Activated CD4-positive, alpha-beta T cell treated with anti-CD3 and anti-CD28 coated beads, Interleukin-2, amount 10 ng/mL, durations not matched to agents 24 days and 14 days (primary cell): ENCODE measurements at regions of chr3 and their contacts with region 1.

Region 1: DNA sequence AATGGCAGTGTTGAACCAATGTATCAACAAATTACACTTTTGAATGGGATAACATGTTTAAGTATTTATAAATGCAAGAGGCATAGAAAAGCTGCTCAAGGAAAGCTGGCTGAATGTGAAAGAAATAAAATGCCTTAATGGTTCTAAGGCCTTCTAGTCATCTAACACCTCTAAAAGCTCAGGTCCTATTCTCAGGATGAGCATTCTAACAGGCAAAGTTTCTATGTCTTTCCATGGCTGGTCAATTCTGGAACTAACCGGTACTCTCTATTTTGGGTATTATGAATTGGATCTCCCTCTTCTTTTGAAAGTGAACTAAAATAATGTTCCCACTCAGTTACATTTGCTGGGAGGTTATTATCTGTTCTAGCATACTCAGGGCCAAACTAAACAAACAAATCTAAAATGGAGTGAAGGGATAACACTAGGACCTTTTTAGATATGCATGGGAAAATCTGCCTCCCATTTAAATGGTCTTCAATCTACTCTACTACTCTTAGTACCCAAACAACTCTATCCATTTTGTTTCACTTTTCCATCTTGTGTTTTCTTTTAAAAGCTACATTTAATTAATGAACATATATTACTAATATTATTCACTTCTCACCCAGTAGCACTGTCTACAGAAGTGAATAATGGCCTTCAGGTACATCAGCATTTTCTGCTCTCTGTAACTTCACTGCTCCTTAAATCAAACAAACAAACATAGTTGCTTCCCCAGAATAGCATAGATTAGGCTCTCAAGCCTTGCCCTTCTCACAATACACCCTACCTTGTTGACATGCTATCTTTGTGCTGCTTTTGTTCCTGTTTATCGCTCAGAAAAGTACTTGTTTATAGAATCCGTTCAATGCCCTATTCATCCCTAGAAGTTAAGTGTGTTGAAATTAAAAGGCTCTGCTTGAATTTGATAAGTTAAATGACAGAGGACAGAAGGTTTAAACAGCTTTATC is 46.4 kb downstream of the CBLB start:
- DNase-seq: no peak
- H3K4me3 Mint-ChIP-seq: peak overlapping the region; percentile 16
- H3K27ac Mint-ChIP-seq: peak overlapping the region; percentile 95
- H3K4me1 Mint-ChIP-seq: peaks cover 52% of the 10 kb centered on the region
- H3K27me3 Mint-ChIP-seq: no peaks in the 10 kb centered on the region

Region 2: GRCh38 chr3:105431200-105431599 is 391.2 kb before region 1 on chr3:
- intact Hi-C with region 1: no loop called
- DNase-seq: no peak
- H3K4me3 Mint-ChIP-seq: no peak overlapping the region
- H3K27ac Mint-ChIP-seq: no peak overlapping the region
- H3K4me1 Mint-ChIP-seq: no peaks in the 10 kb centered on the region
- H3K27me3 Mint-ChIP-seq: no peaks in the 10 kb centered on the region

Region 3: GRCh38 chr3:105806361-105806760 is 16.1 kb before region 1 on chr3:
- intact Hi-C with region 1: loop called (anchors 1 kb)
- DNase-seq: peak; percentile 75
- H3K4me3 Mint-ChIP-seq: peak overlapping the region; percentile 36
- H3K27ac Mint-ChIP-seq: peak overlapping the region; percentile 93
- H3K4me1 Mint-ChIP-seq: peaks cover 44% of the 10 kb centered on the region
- H3K27me3 Mint-ChIP-seq: no peaks in the 10 kb centered on the region

Region 4: DNA sequence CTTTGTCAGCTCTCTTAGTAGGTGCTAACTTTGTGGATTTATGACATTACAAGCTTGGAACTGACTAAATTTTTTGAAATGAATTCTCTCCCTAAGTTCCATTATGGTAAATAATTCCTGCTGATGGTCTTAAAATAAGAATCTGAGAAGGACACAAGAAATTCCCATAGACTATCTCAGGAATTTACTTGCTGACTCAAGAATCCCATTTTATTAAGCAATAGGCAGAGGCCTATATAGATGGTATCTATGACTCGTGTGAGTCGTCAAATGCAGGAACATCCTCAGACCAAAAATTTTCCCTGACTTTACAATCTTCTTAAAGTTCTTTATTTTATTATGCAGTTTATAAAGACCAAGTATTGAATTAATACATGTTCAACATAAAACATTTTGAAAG is 77.1 kb after region 1 on chr3:
- intact Hi-C with region 1: no loop called
- DNase-seq: no peak
- H3K4me3 Mint-ChIP-seq: no peak overlapping the region
- H3K27ac Mint-ChIP-seq: no peak overlapping the region
- H3K4me1 Mint-ChIP-seq: no peaks in the 10 kb centered on the region
- H3K27me3 Mint-ChIP-seq: no peaks in the 10 kb centered on the region

Region 5: DNA sequence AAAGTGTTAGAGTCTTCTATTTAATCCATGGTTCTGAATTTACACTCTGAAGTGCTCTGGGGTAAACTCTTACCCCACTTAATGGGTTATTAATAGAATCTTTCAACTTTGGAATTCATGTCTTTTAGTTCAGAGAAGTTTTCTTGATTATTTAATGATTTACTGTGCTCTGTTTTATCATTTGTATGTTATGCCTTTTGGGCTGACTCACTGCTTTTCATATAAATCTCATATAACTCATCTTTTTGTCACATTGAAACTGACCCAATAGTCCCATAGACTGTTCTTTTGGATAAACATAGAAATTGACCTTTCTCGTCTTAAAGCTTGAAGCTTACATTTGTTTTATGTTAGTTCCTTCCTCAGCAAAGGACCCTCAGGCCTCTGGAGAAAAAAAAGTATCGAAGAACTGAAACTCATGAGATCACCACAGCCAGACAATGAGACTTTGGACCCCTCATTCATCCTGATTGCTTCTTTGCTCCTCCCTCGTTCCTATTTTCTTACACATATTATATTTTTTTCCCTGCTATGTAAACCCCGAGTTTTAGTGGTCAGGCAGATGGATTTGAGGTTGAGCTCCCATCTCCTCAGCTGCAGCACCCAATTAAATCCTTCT is 275.5 kb after region 1 on chr3:
- intact Hi-C with region 1: no loop called
- DNase-seq: no peak
- H3K4me3 Mint-ChIP-seq: no peak overlapping the region
- H3K27ac Mint-ChIP-seq: no peak overlapping the region
- H3K4me1 Mint-ChIP-seq: peaks cover 5% of the 10 kb centered on the region
- H3K27me3 Mint-ChIP-seq: no peaks in the 10 kb centered on the region

Region 6: GRCh38 chr3:106862067-106862466 is 1039.6 kb after region 1 on chr3:
- intact Hi-C with region 1: no loop called
- DNase-seq: no peak
- H3K4me3 Mint-ChIP-seq: no peak overlapping the region
- H3K27ac Mint-ChIP-seq: no peak overlapping the region
- H3K4me1 Mint-ChIP-seq: no peaks in the 10 kb centered on the region
- H3K27me3 Mint-ChIP-seq: no peaks in the 10 kb centered on the region